ENCODE measurements at regions of chr9 and their contacts with region 1.

Region 1: DNA sequence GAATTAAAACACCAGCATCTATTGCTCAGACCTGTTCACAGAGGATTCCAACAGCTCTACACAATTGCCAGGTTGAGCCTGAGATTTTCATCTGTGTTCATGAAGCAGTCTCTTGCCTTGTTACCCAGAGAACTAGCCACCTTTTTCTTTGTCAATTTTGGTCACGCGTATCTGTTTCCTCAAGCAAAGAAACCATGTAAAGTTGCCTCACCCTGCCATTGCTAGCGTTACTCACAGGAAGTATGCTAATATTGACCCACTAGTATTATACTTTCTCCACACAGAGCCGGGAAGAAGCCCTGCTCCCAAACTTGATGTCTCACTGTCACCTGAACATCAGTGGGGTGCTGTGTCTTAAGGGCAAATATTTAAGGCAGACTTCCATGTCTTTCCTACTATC is 168.5 kb downstream of the PLPPR1 start:
- DNase-seq: no peak
- ATAC-seq: no peak
- H3K4me3 Mint-ChIP-seq: no peak overlapping the region
- H3K27ac Mint-ChIP-seq: no peak overlapping the region
- H3K4me1 Mint-ChIP-seq: no peaks in the 10 kb centered on the region
- H3K27me3 Mint-ChIP-seq: no peaks in the 10 kb centered on the region

Region 2: DNA sequence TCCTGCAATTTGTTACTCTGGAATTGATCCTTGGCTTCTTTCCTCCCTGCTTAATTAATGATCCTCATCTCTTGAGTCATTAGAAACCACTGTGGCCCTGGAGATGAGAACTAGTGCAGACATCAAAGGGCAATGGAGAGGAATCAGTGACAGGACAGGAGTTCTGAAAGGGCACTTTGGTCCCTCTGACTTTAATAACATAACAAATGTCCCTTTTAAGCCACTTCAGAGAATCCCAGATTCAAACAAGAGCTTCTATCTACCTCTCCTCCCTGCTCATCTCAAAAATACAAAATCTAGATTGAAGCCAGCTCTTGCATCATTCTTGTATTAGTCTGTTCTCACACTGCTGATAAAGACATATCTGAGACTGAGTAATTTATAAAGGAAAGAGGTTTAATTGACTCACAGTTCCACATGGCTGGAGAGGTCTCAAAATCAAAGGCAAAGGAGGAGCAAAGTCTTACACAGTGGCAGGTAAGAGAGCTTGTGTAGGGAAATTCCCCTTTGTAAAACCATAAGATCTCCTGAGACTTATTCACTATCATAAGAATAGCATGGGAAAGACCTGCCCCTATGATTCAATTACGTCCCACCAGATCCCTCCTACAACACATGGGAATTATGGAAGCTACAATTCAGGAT is 29.4 kb before region 1 on chr9:
- CTCF ChIA-PET with region 1: no interaction called
- POLR2A ChIA-PET with region 1: no interaction called
- intact Hi-C with region 1: no loop called
- DNase-seq: no peak
- ATAC-seq: peak; percentile 30
- H3K4me3 Mint-ChIP-seq: no peak overlapping the region
- H3K27ac Mint-ChIP-seq: no peak overlapping the region
- H3K4me1 Mint-ChIP-seq: no peaks in the 10 kb centered on the region
- H3K27me3 Mint-ChIP-seq: peaks cover under 1% of the 10 kb centered on the region

Region 3: GRCh38 chr9:101242651-101243050 is 45.6 kb after region 1 on chr9:
- CTCF ChIA-PET with region 1: no interaction called
- POLR2A ChIA-PET with region 1: interaction called, 3 read pairs
- intact Hi-C with region 1: loop called in 1 of 2 experiments (anchors 10 kb)
- DNase-seq: no peak
- ATAC-seq: no peak
- H3K4me3 Mint-ChIP-seq: no peak overlapping the region
- H3K27ac Mint-ChIP-seq: no peak overlapping the region
- H3K4me1 Mint-ChIP-seq: no peaks in the 10 kb centered on the region
- H3K27me3 Mint-ChIP-seq: peaks cover 4% of the 10 kb centered on the region